Activated naive CD4-positive, alpha-beta T cell treated with anti-CD3 and anti-CD28 coated beads for 36 hours (primary cell): ENCODE measurements at regions of chr1 and their contacts with region 1.

Region 1: GRCh38 chr1:149886396-149887195 is 12.8 kb upstream of the BOLA1 start:
- DNase-seq: peak; percentile 92
- H3K4me3 Mint-ChIP-seq: no peak overlapping the region
- H3K27ac Mint-ChIP-seq: no peak overlapping the region
- H3K4me1 Mint-ChIP-seq: peaks cover 12% of the 10 kb centered on the region
- H3K27me3 Mint-ChIP-seq: no peaks in the 10 kb centered on the region

Region 2: GRCh38 chr1:149927503-149928387 is 41.1 kb after region 1 on chr1 and contains the start of gene SF3B4:
- CTCF ChIA-PET with region 1: interaction called, 3 read pairs
- intact Hi-C with region 1: loop called (anchors 1 kb)
- DNase-seq: peak; percentile 97
- H3K4me3 Mint-ChIP-seq: peak within 1 kb of the TSS; percentile 99
- H3K27ac Mint-ChIP-seq: peak within 1 kb of the TSS; percentile 95
- H3K4me1 Mint-ChIP-seq: peaks cover 45% of the 10 kb centered on the region
- H3K27me3 Mint-ChIP-seq: no peaks in the 10 kb centered on the region
- total RNA-seq, gene SF3B4: 47.3 to 48.5 TPM

Region 3: DNA sequence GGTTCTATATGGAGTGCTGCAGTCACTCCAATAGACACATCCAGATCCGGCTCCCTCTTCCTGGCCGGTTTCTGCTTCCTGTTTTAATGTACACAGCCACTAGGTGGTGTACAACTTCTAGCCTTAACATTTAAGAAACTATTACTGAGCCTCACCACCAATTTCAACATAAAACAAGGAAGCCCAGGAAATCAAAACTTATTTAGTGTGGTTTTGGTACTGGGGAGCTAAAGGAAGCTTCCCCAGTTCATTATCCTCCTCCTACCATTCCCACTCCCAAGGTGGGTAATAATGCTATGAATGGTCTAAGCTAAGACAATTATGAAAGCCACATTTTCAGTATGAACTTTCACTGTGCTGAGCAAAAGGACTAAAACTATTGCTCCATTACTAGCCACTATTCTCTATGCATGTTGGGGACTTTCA is 75.5 kb after region 1 on chr1:
- CTCF ChIA-PET with region 1: interaction called, 4 read pairs
- intact Hi-C with region 1: loop called (anchors 1 kb)
- DNase-seq: peak; percentile 63
- H3K4me3 Mint-ChIP-seq: no peak overlapping the region
- H3K27ac Mint-ChIP-seq: no peak overlapping the region
- H3K4me1 Mint-ChIP-seq: peaks cover 12% of the 10 kb centered on the region
- H3K27me3 Mint-ChIP-seq: no peaks in the 10 kb centered on the region

Region 4: GRCh38 chr1:150067184-150068036 is 180.8 kb after region 1 on chr1 and contains the start of gene VPS45:
- CTCF ChIA-PET with region 1: interaction called, 3 read pairs
- intact Hi-C with region 1: loop called (anchors 1 kb)
- DNase-seq: peak; percentile 90
- H3K4me3 Mint-ChIP-seq: peak within 1 kb of the TSS; percentile 94
- H3K27ac Mint-ChIP-seq: peak within 1 kb of the TSS; percentile 90
- H3K4me1 Mint-ChIP-seq: peaks cover 29% of the 10 kb centered on the region
- H3K27me3 Mint-ChIP-seq: no peaks in the 10 kb centered on the region
- total RNA-seq, gene VPS45: 21.2 to 23.6 TPM

Region 5: GRCh38 chr1:150186789-150187559 is 300.4 kb after region 1 on chr1:
- CTCF ChIA-PET with region 1: interaction called, 14 read pairs
- intact Hi-C with region 1: loop called (anchors 1 kb)
- DNase-seq: peak; percentile 22
- H3K4me3 Mint-ChIP-seq: peak overlapping the region; percentile 15
- H3K27ac Mint-ChIP-seq: peak overlapping the region; percentile 9
- H3K4me1 Mint-ChIP-seq: peaks cover 12% of the 10 kb centered on the region
- H3K27me3 Mint-ChIP-seq: no peaks in the 10 kb centered on the region